Right ventricle myocardium superior (tissue), 1 donor: ENCODE measurements at regions of chr22 and their contacts with region 1.

Region 1: DNA sequence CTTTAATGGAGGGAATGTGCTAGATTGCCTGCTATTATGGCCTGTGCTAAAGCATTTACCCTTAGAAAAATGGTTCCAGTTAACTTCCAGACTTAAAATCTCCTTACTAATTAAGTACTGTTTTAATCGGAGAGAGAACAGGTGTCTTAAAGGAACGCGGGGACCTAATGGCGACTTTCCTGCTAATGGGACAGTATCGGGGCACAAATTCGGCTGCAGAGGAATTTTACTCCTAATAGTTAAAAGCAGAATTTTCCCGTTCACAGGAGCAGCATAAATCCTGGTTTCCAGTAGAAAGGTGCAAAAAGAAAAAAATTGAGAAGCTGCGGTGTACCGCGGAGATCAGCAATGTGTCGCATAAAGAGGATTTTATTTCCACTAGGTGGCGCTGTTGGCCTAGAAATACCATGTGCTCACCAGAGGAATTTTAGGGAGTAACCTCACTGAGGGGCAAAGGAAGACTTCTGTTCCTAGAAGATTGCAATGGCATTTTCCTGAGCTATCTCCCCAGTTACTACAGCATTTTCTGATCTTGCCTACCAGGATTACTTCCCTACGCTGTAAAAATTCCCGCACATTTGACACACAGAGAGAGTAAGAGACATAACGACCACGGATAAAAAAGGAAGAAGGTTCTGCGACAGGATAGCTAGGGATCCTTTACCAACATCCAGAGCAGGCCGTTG is 44.5 kb downstream of the ZNF280B start:
- DNase-seq: no peak
- ATAC-seq: peak; percentile 79

Region 2: DNA sequence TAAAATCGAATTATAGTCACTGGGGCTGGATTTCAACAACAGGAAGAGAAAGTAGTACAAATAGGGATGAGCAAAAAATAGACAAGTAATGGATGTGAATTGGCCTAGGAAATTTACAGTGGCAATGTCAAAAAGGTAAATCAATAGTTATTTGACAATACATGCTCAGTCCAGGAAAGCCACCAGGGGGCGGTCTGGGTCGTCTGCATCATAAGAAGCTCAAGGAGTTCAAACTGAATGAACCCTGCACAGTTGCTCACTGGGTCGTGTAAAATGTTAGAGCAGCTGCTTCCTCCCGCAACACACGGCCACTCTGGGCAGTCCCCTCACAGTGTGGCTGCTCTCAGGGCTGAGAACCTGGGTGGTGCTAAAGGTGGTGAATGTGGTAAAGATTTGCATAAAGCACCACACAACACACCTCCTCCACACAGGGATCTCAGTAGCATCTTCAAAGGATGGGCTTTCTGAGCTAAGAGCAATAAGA is 41.3 kb before region 1 on chr22:
- intact Hi-C with region 1: no loop called
- DNase-seq: peak; percentile 73
- ATAC-seq: peak; percentile 46

Region 3: DNA sequence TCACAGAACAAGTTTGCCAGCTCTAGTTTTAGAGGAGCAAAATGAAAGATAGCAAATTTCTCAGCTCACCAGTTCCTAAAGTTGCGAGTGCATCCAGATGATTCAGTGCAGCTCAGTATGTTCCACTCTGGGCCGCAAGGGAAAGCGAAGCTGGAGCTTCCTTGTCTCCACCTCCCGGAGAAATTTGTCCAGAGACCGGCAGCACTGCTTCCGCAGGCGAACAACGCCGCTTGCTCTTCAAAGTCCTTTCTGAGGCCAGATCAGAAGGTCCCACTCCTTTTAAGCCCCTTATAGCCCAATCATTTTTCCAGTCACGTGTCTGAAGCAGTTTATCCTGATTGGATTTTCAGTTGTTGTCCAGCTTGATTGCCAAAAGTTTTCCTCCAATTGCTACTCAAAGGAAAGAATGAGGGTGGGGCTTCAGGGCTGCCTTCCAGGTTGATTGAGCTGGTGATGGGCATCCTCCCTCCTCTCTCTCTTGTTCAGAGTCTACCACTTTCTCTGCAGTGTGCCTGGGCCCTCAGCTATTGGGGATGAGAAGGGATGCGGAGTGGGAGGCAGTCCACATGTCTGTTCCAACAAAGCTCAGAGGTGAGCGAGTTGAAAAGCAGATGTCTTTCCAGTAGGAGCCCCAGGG is 56.1 kb after region 1 on chr22 and contains the start of gene ZNF280A:
- intact Hi-C with region 1: no loop called
- DNase-seq: no peak
- ATAC-seq: no peak
- total RNA-seq, gene ZNF280A: not detected

Region 4: DNA sequence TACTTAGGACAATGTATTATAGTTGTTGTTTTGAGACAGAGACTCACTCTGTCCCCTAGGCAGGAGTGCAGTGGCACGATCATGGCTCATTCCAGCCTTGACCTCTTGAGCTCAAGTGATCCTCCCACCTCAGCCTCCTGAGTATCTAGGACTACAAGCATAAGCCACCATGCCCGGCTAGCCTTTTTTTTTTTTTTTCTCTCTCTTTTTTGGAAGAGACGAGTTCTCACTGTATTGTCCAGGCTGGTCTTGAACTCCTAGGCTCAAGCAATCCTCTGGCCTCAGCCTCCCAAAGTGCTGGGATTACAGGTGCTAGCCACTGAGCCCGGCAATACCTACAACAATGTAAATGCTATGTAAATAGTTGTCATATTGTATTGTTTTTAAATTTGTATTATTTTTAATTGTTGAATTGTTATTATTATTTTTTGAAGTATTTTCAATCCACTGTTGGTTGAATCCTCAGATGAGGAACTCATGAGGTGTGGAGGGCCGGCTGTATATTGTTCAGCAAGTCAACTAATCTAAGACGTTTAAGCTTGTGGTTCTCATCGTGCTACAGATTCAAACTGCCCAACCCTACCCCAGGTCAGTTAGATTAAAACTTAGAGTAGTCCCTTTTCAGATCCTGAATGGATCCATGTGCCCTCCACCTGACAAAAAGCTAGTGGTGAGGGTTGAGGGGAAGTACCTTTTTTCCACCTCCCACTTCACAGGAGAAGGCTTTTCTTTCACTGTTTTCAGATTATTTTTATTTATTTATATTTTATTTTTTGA is 68.0 kb after region 1 on chr22:
- intact Hi-C with region 1: no loop called
- DNase-seq: no peak
- ATAC-seq: no peak

Region 5: GRCh38 chr22:22593964-22594656 is 130.1 kb after region 1 on chr22:
- intact Hi-C with region 1: no loop called
- DNase-seq: peak; percentile 57
- ATAC-seq: no peak

Region 6: DNA sequence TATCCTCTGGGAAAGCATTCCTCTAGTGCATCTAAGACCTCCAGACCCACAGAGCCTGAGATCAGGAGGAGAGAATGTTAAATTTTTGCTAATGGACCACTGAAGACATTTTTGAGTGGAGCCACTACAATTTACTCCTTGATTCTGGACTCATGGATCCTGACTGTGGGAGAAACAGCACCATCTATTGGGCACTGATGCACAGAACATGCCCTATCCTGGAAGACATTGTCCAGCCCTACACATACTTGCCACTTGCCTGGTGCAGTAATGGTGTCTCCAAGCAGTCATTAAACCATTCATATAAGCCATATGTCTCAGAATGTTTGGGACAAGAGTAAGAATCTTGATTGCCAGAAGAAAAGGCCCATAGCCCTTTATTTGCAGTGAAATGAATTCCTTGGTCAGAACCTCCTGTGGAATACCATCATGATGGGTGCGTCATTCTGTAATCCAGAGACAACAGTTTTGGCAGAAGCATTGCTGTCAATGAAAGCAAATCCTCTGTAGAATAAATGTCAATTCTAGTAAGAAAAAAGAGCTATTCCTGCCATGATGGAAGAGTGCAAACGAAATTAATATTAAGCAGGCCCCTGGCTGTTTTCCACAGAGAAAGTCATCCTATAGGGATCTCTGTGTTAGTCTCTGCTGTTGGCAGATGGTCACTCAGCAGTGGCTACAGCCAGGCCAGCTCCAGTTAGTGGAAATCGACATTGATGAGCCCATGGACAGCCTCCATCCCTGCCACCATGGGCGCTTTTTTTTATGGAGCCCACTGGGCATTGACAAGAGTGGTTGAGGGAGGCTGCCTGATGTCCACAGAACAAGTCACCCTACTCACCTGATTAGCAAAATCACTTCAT is 223.9 kb after region 1 on chr22:
- intact Hi-C with region 1: loop called (anchors 10 kb)
- DNase-seq: no peak
- ATAC-seq: peak; percentile 90